Left colon (tissue), 2 donors: ENCODE measurements at regions of chr1 and their contacts with region 1.

Region 1: GRCh38 chr1:10873189-10873588 is 76.7 kb upstream of the CASZ1 start:
- DNase-seq: no peak
- ATAC-seq: no peak

Region 2: DNA sequence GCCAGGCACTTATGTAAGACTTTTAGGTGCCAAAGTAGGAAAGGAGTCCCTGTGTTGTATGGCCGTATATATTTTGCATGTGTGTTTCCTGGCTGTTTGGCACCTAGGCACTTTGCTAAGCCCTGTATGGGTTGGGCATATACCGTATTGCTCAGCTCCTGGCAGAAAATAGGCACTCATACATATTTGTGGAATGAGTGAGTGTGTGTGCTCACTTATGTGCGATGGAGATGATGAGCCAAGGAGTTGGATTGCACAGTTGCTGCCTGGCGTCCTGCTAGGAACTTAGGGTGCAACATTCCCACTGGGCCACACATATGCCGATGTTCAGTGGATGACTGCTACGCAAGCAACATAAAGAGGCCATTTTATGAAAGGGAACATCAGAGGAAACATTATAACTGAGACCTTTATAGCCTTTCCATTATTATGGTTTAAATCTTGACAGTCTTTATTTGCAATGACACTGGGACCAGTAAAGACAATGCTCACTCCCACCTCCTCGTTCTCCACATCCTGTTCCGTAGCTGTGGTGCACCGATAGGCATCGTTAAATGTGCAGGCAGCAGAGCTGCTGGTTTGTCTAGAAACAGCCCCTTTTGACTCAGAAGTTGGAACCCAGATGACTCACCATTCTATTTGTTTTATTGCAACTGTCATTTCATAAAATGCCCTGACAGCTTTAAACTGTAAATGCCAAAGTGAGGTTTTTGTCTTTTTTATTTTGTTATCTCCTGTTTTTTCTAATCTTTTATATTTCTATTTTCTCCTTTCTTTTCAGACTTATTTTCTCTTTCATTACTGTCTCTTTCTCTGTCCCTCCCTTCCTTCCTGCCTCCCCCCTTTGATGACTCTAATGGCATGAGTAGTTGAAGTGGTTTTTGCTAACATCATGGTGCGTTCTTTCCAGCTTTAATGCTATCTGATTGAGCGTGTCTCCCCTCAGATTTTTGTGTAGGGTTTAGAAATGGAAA is 362.4 kb before region 1 on chr1:
- intact Hi-C with region 1: loop called in 1 of 2 experiments (anchors 5 kb)
- DNase-seq: no peak
- ATAC-seq: peak; percentile 57

Region 3: GRCh38 chr1:11693024-11693590 is 819.9 kb after region 1 on chr1:
- intact Hi-C with region 1: no loop called
- DNase-seq: no peak
- ATAC-seq: no peak